Endothelial cell of umbilical vein (primary cell): ENCODE measurements at regions of chr13 and their contacts with region 1.

Region 1: GRCh38 chr13:76512721-76513145 is 373.5 kb downstream of the KCTD12 start:
- DNase-seq: peak; percentile 98
- H3K4me3 ChIP-seq: no peak overlapping the region
- H3K27ac ChIP-seq: peak overlapping the region; percentile 89
- H3K4me1 ChIP-seq: peaks cover 49% of the 10 kb centered on the region
- H3K27me3 ChIP-seq: no peaks in the 10 kb centered on the region
- CTCF ChIP-seq: no peak
- POLR2A ChIP-seq: peak; percentile 90

Region 2: DNA sequence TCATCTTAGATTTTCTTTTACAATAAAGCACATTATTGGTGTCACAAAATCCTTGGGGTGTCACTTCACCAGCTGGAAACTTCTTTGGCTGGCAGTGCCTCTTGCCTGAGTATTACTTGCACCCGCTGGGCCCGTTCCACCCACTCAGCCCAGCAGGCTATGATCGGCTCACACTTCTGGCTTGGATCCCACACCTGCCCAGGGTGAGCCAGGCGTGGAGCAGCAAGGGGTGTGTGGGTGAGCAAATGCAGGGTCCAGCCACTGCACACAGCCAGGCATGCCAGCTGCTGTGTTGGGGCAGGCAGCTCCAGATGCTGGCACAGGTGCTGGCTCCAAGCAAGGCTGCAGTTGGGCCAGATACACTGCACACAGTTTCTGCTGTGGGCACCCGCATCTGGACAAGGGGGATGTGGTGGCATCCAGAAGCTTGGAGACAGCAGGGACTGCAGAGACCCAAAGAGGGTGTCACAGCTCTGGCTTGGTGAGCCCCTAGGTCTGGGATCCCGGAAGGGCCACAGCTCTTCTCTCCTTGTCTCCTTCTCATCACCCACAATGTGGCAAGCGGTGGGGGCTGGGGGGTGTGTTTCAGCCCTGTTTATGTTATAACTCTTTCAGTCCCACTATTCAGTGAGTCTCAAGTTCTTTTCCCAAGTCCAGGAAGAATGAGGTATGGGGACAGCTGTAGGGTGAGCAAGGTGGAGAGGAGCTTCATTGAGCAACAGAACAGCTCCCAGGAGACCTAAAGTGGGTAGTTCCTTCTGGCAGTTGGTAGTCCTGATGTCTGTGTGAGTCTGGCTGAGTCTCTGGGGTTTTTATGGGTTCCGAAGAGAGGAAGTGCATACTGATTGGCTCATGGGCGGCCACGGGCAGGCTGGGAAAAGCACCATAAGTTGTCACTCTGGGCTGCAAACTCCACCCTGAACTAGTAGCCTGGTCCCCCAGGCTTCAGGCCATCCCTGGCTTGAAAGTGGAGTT is 1005.4 kb before region 1 on chr13:
- CTCF ChIA-PET with region 1: no interaction called
- POLR2A ChIA-PET with region 1: no interaction called
- dilution Hi-C with region 1: no loop called
- intact Hi-C with region 1: no loop called
- DNase-seq: no peak
- H3K4me3 ChIP-seq: no peak overlapping the region
- H3K27ac ChIP-seq: no peak overlapping the region
- H3K4me1 ChIP-seq: peaks cover 2% of the 10 kb centered on the region
- H3K27me3 ChIP-seq: peaks cover 0 to 2% of the 10 kb centered on the region in 2 experiments
- CTCF ChIP-seq: no peak
- POLR2A ChIP-seq: no peak

Region 3: DNA sequence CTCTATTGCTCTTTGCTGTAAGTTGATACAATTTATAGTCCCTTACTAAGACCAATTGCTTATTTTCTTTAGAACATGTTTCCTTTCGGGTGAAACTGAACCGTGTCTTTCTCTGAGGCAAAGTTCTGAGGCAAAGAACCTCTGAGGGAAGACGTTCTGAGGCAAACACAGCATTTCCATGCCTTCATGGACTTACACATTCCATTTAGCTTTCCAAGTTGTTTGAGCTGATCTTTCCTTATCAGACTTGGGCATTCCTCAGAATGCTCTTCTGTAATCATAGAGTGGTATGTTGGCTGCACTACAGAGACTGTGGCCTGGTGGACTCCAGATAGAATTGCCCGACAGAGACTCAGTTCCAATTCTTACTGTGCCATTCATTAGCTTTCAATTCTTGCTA is 205.6 kb before region 1 on chr13:
- CTCF ChIA-PET with region 1: no interaction called
- POLR2A ChIA-PET with region 1: no interaction called
- dilution Hi-C with region 1: no loop called
- intact Hi-C with region 1: no loop called
- DNase-seq: peak; percentile 4
- H3K4me3 ChIP-seq: no peak overlapping the region
- H3K27ac ChIP-seq: no peak overlapping the region
- H3K4me1 ChIP-seq: no peaks in the 10 kb centered on the region
- H3K27me3 ChIP-seq: no peaks in the 10 kb centered on the region
- CTCF ChIP-seq: no peak
- POLR2A ChIP-seq: no peak

Region 4: GRCh38 chr13:76552041-76552772 is 39.5 kb after region 1 on chr13:
- CTCF ChIA-PET with region 1: interaction called, 5 read pairs
- POLR2A ChIA-PET with region 1: interaction called, 3 read pairs
- dilution Hi-C with region 1: no loop called
- intact Hi-C with region 1: loop called (anchors 1 kb)
- DNase-seq: peak; percentile 88
- H3K4me3 ChIP-seq: peak overlapping the region in 1 of 3 experiments; percentile 7
- H3K27ac ChIP-seq: peak overlapping the region; percentile 80
- H3K4me1 ChIP-seq: peaks cover 10% of the 10 kb centered on the region
- H3K27me3 ChIP-seq: no peaks in the 10 kb centered on the region
- CTCF ChIP-seq: no peak
- POLR2A ChIP-seq: no peak

Region 5: DNA sequence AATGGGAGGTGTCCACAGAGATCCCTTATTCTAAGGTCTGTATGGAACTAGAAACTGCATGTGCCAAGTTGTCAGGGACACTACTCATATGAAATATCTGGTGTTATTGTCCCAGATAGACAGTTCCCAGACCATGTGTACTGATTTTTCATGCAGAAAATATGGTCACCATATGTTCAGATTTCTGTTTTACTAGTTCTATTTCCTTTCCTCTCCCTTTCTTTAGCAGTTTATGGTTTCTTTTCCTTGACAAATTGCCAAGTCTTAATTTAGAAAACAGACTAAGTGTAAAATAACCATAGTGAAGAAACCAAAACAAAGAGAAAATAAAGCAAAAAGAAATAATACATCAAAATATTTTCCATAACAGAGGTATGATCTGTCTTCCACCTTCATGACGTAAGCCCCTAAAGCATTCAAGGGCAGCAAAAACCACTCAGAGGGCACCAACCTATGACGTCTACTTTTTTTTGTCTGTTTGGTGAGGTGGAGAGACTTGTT is 125.0 kb after region 1 on chr13:
- CTCF ChIA-PET with region 1: no interaction called
- POLR2A ChIA-PET with region 1: no interaction called
- dilution Hi-C with region 1: no loop called
- intact Hi-C with region 1: loop called (anchors 2 kb)
- DNase-seq: peak; percentile 80
- H3K4me3 ChIP-seq: no peak overlapping the region
- H3K27ac ChIP-seq: no peak overlapping the region
- H3K4me1 ChIP-seq: peaks cover 6% of the 10 kb centered on the region
- H3K27me3 ChIP-seq: no peaks in the 10 kb centered on the region
- CTCF ChIP-seq: no peak
- POLR2A ChIP-seq: no peak

Region 6: GRCh38 chr13:76812206-76812897 is 299.6 kb after region 1 on chr13:
- CTCF ChIA-PET with region 1: no interaction called
- POLR2A ChIA-PET with region 1: no interaction called
- dilution Hi-C with region 1: no loop called
- intact Hi-C with region 1: loop called (anchors 2 kb)
- DNase-seq: no peak
- H3K4me3 ChIP-seq: no peak overlapping the region
- H3K27ac ChIP-seq: no peak overlapping the region
- H3K4me1 ChIP-seq: peaks cover 9% of the 10 kb centered on the region
- H3K27me3 ChIP-seq: no peaks in the 10 kb centered on the region
- CTCF ChIP-seq: no peak
- POLR2A ChIP-seq: no peak